ENCODE measurements at regions of chr20 and their contacts with region 1.

Region 1: DNA sequence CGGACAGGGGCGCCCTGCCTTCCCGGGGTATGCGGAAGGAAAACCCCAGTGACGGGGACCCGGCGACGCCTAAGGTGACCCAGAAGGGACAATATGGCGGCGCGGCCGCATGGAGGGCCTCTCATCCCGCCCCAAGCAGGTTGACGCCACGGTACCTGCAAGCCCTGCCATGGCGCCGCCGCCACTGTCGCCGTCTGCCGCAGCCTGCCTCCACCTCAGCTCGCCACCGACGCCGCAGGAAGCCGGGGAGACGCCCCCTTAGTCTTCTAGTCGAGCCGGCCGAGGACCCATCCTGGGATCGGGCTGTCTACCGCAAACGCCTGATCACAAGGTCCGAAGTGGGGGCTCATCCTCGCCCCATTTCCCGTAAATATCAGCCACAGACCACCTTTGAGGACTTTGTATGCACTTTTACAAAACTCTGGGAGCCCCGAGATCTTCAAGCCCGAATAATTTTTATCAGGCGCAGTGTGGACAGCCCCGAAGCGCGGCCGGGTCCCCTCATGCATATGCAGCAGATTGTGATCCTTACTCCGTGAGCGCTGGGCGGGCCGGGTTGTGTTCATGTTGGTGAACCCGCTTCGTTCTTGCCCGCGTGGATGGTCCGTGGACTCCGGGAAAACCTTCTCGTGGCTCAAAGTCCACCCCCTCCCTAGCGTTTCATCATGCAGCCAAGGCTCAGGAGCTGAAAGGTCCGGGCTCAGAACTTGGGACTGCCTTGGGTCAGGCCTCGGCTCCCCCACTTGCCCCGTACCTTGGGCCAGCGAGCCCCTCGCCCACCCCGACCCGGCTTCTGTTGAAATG is at the start of gene BLCAP:
- DNase-seq: peak; percentile 88 to 96 (median 94)
- ATAC-seq: peak; percentile 90
- H3K4me3 ChIP-seq: peak within 1 kb of the TSS; percentile 93 to 100
- H3K4me3 Mint-ChIP-seq: peak within 1 kb of the TSS; percentile 85
- H3K27ac ChIP-seq: peak within 1 kb of the TSS; percentile 93 to 100
- H3K27ac Mint-ChIP-seq: peak within 1 kb of the TSS; percentile 100
- H3K4me1 ChIP-seq: peaks cover 42% of the 10 kb centered on the region
- H3K4me1 Mint-ChIP-seq: peaks cover 42% of the 10 kb centered on the region
- H3K27me3 ChIP-seq: no peaks in the 10 kb centered on the region
- H3K27me3 Mint-ChIP-seq: no peaks in the 10 kb centered on the region
- CTCF ChIP-seq: no peak
- total RNA-seq, gene BLCAP: 60.1 to 60.6 TPM

Region 2: GRCh38 chr20:36460648-36461599 is 1066.9 kb before region 1 on chr20:
- CTCF ChIA-PET with region 1: no interaction called
- POLR2A ChIA-PET with region 1: no interaction called
- intact Hi-C with region 1: loop called in 1 of 2 experiments (anchors 5 kb)
- DNase-seq: peak; percentile 78 to 97 (median 89)
- ATAC-seq: peak; percentile 83
- H3K4me3 ChIP-seq: peak overlapping the region; percentile 47 to 52
- H3K4me3 Mint-ChIP-seq: peak overlapping the region; percentile 80
- H3K27ac ChIP-seq: peak overlapping the region; percentile 69 to 90
- H3K27ac Mint-ChIP-seq: peak overlapping the region; percentile 89
- H3K4me1 ChIP-seq: peaks cover 45% of the 10 kb centered on the region
- H3K4me1 Mint-ChIP-seq: peaks cover 44% of the 10 kb centered on the region
- H3K27me3 ChIP-seq: no peaks in the 10 kb centered on the region
- H3K27me3 Mint-ChIP-seq: no peaks in the 10 kb centered on the region
- CTCF ChIP-seq: no peak

Region 3: DNA sequence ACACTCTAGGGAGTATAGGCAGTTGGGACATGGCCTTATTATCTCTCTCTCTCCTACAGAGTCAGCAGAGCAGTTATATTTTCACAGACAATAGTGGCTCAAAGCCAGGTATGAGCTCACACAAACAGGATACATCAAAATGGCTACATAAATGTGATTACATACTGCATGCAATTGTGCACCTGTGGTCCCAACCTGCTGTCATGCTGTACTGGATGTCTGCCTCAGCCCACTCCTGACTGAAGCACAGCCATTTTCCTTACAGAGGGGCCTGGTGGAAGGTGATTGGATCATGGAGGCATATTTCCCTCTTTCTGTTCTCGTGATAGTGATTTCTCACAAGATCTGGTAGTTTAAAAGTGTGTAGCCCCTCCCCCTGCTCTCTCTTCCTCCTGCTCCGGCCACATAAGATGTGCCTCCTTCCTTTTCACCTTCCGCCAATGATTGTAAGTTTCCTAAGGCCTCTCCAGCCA is 539.3 kb before region 1 on chr20:
- CTCF ChIA-PET with region 1: no interaction called
- POLR2A ChIA-PET with region 1: no interaction called
- intact Hi-C with region 1: no loop called
- DNase-seq: peak in 5 of 9 experiments; percentile 25 to 62 (median 47)
- ATAC-seq: peak; percentile 90
- H3K4me3 ChIP-seq: no peak overlapping the region
- H3K4me3 Mint-ChIP-seq: peak overlapping the region; percentile 27
- H3K27ac ChIP-seq: peak overlapping the region; percentile 15 to 37
- H3K27ac Mint-ChIP-seq: peak overlapping the region; percentile 94
- H3K4me1 ChIP-seq: peaks cover 17% of the 10 kb centered on the region
- H3K4me1 Mint-ChIP-seq: peaks cover 43% of the 10 kb centered on the region
- H3K27me3 ChIP-seq: no peaks in the 10 kb centered on the region
- H3K27me3 Mint-ChIP-seq: no peaks in the 10 kb centered on the region
- CTCF ChIP-seq: no peak

Region 4: GRCh38 chr20:37178839-37179670 is 348.8 kb before region 1 on chr20 and contains the starts of genes MROH8 and RPN2:
- CTCF ChIA-PET with region 1: no interaction called
- POLR2A ChIA-PET with region 1: interaction called, 9 read pairs
- intact Hi-C with region 1: loop called (anchors 1 kb)
- DNase-seq: peak; percentile 88 to 97 (median 94)
- ATAC-seq: peak; percentile 92
- H3K4me3 ChIP-seq: peak within 1 kb of the TSS; percentile 95 to 98
- H3K4me3 Mint-ChIP-seq: peak within 1 kb of the TSS; percentile 98
- H3K27ac ChIP-seq: peak within 1 kb of the TSS; percentile 94 to 96
- H3K27ac Mint-ChIP-seq: peak within 1 kb of the TSS; percentile 98
- H3K4me1 ChIP-seq: peaks cover 26% of the 10 kb centered on the region
- H3K4me1 Mint-ChIP-seq: peaks cover 44% of the 10 kb centered on the region
- H3K27me3 ChIP-seq: no peaks in the 10 kb centered on the region
- H3K27me3 Mint-ChIP-seq: no peaks in the 10 kb centered on the region
- CTCF ChIP-seq: no peak
- total RNA-seq, gene MROH8: 0.60 to 1.1 TPM
- total RNA-seq, gene RPN2: 60.8 to 68.8 TPM

Region 5: DNA sequence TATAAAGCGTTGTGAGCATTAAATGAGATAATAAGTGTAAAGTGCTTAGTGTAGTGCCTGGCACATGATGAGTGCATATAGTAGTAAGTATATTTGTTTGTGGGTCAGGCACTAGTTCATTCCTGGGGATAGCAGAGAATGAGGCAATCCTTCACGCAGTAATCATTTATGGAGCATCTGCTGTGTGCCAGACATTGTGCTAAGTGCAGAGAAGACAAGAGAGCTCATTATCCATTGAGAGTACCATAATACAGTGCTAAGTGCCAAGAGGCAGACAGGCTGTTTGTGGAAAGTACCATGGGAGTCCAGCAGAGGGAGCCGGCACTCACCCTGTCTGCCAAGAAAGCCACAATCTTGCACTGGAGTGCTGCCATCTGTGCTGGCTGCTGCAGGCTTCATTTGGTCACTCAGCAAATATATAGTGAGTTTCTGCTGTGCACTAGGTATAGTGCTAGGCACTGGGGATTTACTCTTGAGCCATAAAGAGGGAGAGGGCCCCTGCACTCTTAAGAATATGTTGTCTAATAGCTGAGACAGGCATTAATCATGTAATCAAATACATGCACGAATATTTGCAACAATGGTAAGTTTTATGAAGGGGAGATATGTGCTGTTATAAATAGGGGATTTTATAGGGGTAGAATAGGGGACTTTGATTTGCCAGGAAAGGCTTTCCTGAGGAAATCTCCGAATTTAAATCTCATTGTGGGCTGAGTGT is 335.5 kb before region 1 on chr20:
- CTCF ChIA-PET with region 1: interaction called, 77 read pairs
- POLR2A ChIA-PET with region 1: no interaction called
- intact Hi-C with region 1: loop called in 1 of 2 experiments (anchors 2 kb)
- DNase-seq: peak; percentile 46 to 80 (median 72)
- ATAC-seq: peak; percentile 80
- H3K4me3 ChIP-seq: no peak overlapping the region
- H3K4me3 Mint-ChIP-seq: no peak overlapping the region
- H3K27ac ChIP-seq: no peak overlapping the region
- H3K27ac Mint-ChIP-seq: no peak overlapping the region
- H3K4me1 ChIP-seq: peaks cover 48% of the 10 kb centered on the region
- H3K4me1 Mint-ChIP-seq: peaks cover 79% of the 10 kb centered on the region
- H3K27me3 ChIP-seq: no peaks in the 10 kb centered on the region
- H3K27me3 Mint-ChIP-seq: no peaks in the 10 kb centered on the region
- CTCF ChIP-seq: peak; percentile 95

Region 6: GRCh38 chr20:37384683-37385174 is 143.1 kb before region 1 on chr20:
- CTCF ChIA-PET with region 1: interaction called, 10 read pairs
- POLR2A ChIA-PET with region 1: no interaction called
- intact Hi-C with region 1: loop called (anchors 2 kb)
- DNase-seq: peak; percentile 65 to 91 (median 74)
- ATAC-seq: peak; percentile 95
- H3K4me3 ChIP-seq: peak overlapping the region; percentile 41 to 46
- H3K4me3 Mint-ChIP-seq: peak overlapping the region; percentile 85
- H3K27ac ChIP-seq: no peak overlapping the region
- H3K27ac Mint-ChIP-seq: no peak overlapping the region
- H3K4me1 ChIP-seq: peaks cover 5% of the 10 kb centered on the region
- H3K4me1 Mint-ChIP-seq: peaks cover 8% of the 10 kb centered on the region
- H3K27me3 ChIP-seq: no peaks in the 10 kb centered on the region
- H3K27me3 Mint-ChIP-seq: peaks cover 3% of the 10 kb centered on the region
- CTCF ChIP-seq: peak; percentile 79

Region 7: DNA sequence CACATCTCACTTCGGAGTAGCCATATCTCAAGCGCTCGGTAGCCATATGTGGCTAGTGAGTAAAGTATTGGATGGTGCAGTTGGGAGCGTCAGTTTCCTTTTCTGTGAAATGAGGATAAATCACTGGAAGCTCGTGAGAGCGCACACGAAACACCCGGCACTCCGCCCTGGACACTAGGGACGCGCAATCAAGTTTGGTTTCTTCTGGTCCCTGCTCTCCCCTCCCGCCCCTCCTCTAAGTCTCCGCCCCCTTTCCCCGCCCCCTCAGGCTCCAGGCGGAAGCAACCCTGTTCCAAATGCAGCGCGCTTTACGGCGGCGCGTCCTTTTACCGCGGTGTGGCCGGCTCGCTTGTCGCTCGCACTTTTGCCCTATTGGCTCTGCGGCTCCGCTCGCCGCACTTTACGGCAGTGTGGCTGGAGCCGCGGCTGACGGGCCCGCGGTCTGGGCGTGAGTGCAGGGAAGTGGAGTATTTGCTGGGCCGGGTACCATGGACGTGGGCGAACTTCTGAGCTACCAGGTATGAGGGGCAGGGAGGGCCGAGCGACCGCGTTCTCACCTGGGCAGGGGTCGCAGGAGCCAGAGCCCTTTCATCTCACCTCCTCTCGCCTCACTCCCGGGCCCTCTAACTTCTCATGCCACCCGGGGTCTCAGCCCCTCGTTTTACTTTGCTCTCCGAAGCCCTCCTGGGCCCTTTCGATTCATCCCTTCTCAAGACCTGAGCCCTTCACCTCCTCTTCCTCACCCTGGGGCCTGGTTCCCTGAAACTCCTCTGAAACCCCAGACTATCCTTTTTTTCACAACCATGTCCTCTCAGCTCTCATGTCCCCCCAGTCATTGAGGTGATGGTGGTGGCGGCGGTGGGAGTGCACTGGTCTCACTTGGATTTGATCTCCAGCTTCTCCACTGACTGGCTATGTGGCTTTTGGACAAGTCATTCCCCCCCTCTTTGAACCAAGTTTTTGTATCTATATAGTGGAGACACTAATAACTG is 166.1 kb after region 1 on chr20 and contains the start of gene CTNNBL1:
- CTCF ChIA-PET with region 1: no interaction called
- POLR2A ChIA-PET with region 1: no interaction called
- intact Hi-C with region 1: loop called (anchors 1 to 2 kb)
- DNase-seq: peak; percentile 91 to 98 (median 96)
- ATAC-seq: peak; percentile 99
- H3K4me3 ChIP-seq: peak within 1 kb of the TSS; percentile 76 to 85
- H3K4me3 Mint-ChIP-seq: peak within 1 kb of the TSS; percentile 98
- H3K27ac ChIP-seq: peak within 1 kb of the TSS; percentile 60 to 61
- H3K27ac Mint-ChIP-seq: peak within 1 kb of the TSS; percentile 90
- H3K4me1 ChIP-seq: peaks cover 12% of the 10 kb centered on the region
- H3K4me1 Mint-ChIP-seq: peaks cover 43% of the 10 kb centered on the region
- H3K27me3 ChIP-seq: peaks cover 0 to 7% of the 10 kb centered on the region in 2 experiments
- H3K27me3 Mint-ChIP-seq: peaks cover 16% of the 10 kb centered on the region
- CTCF ChIP-seq: no peak
- total RNA-seq, gene CTNNBL1: 22.4 to 26.8 TPM

Measured in CD8-positive, alpha-beta T cell (primary cell).